H1 (cell line): ENCODE measurements at regions of chr21 and their contacts with region 1.

Region 1: DNA sequence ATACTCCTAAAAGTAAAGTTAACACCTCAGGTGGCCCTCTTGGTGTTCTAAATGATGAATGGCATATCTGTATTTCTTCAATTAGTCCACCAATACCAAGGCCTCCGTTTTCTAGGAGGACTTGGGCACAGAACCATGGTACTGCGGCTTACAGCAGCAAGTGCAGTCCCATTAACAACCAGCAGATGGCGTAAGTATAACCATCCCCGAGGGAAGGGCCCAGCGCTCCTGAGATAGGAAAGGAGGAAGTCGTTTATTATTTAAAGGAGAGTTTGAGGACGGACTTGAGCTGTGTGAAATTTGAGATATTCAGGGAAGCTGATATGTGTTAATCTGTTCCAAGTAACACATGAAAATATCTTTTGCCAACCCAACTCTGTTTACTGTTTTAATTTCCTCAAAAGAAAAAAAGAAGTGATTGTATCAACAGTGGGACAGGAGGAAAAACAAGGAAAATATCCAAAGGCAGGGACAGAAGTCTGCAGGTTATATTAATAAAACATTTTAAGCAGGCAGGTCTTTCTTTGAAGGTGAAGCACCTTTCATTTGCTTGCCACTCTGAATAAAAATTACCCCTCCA is 37.7 kb upstream of the KCNJ15 start:
- DNase-seq: peak; percentile 10 to 87
- H3K4me3 ChIP-seq: no peak overlapping the region
- H3K27ac ChIP-seq: no peak overlapping the region
- H3K4me1 ChIP-seq: no peaks in the 10 kb centered on the region
- H3K27me3 ChIP-seq: no peaks in the 10 kb centered on the region
- CTCF ChIP-seq: peak; percentile 83 to 88 (median 85)
- EP300 ChIP-seq: no peak
- POLR2A ChIP-seq: no peak
- RAD21 ChIP-seq: peak; percentile 73 to 88

Region 2: GRCh38 chr21:38188037-38188436 is 31.1 kb before region 1 on chr21:
- CTCF ChIA-PET with region 1: no interaction called
- POLR2A ChIA-PET with region 1: no interaction called
- DNase-seq: no peak
- H3K4me3 ChIP-seq: no peak overlapping the region
- H3K27ac ChIP-seq: no peak overlapping the region
- H3K4me1 ChIP-seq: no peaks in the 10 kb centered on the region
- H3K27me3 ChIP-seq: no peaks in the 10 kb centered on the region
- CTCF ChIP-seq: no peak
- EP300 ChIP-seq: no peak
- POLR2A ChIP-seq: no peak
- RAD21 ChIP-seq: no peak

Region 3: DNA sequence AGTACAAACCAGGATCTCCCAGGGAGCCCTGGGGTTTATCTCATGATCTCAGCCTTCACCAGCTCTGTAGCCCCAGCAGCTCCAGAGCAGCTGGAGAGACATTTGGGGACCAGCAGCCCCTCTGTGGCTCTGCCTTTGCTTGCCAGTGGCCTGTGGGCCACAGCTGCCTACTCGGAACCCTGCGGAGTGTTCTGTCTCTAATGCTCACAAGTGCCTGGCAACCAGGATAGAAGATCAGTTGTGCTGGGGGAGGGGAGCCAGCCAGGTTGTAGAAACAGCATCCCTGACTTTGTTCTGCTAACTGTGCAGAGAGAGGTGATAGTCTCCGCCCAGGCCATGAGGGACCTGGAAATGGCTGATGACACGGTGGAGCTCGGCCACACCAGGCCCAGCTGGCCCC is 13.2 kb before region 1 on chr21:
- CTCF ChIA-PET with region 1: interaction called, 31 read pairs
- POLR2A ChIA-PET with region 1: no interaction called
- DNase-seq: no peak
- H3K4me3 ChIP-seq: no peak overlapping the region
- H3K27ac ChIP-seq: no peak overlapping the region
- H3K4me1 ChIP-seq: no peaks in the 10 kb centered on the region
- H3K27me3 ChIP-seq: no peaks in the 10 kb centered on the region
- CTCF ChIP-seq: no peak
- EP300 ChIP-seq: no peak
- POLR2A ChIP-seq: no peak
- RAD21 ChIP-seq: no peak

Region 4: GRCh38 chr21:38234395-38235151 is 15.4 kb after region 1 on chr21:
- CTCF ChIA-PET with region 1: interaction called, 15 read pairs
- POLR2A ChIA-PET with region 1: no interaction called
- DNase-seq: no peak
- H3K4me3 ChIP-seq: no peak overlapping the region
- H3K27ac ChIP-seq: no peak overlapping the region
- H3K4me1 ChIP-seq: no peaks in the 10 kb centered on the region
- H3K27me3 ChIP-seq: no peaks in the 10 kb centered on the region
- CTCF ChIP-seq: no peak
- EP300 ChIP-seq: no peak
- POLR2A ChIP-seq: no peak
- RAD21 ChIP-seq: no peak

Region 5: GRCh38 chr21:38333301-38334272 is 114.4 kb after region 1 on chr21:
- CTCF ChIA-PET with region 1: interaction called, 13 read pairs
- POLR2A ChIA-PET with region 1: no interaction called
- DNase-seq: no peak
- H3K4me3 ChIP-seq: no peak overlapping the region
- H3K27ac ChIP-seq: no peak overlapping the region
- H3K4me1 ChIP-seq: no peaks in the 10 kb centered on the region
- H3K27me3 ChIP-seq: no peaks in the 10 kb centered on the region
- CTCF ChIP-seq: peak; percentile 44 to 53 (median 47); a peak in 3 of 4 replicates
- EP300 ChIP-seq: no peak
- POLR2A ChIP-seq: no peak
- RAD21 ChIP-seq: peak; percentile 67 to 81